CD8-positive, alpha-beta T cell (primary cell): ENCODE measurements at regions of chr14 and their contacts with region 1.

Region 1: GRCh38 chr14:28407996-28408395 is 358.6 kb upstream of the FOXG1 start:
- DNase-seq: no peak
- ATAC-seq: no peak
- H3K4me3 ChIP-seq: no peak overlapping the region
- H3K4me3 Mint-ChIP-seq: no peak overlapping the region
- H3K27ac ChIP-seq: no peak overlapping the region
- H3K27ac Mint-ChIP-seq: no peak overlapping the region
- H3K4me1 ChIP-seq: no peaks in the 10 kb centered on the region
- H3K4me1 Mint-ChIP-seq: no peaks in the 10 kb centered on the region
- H3K27me3 ChIP-seq: no peaks in the 10 kb centered on the region
- H3K27me3 Mint-ChIP-seq: no peaks in the 10 kb centered on the region
- CTCF ChIP-seq: no peak

Region 2: GRCh38 chr14:27916326-27916725 is 491.7 kb before region 1 on chr14:
- CTCF ChIA-PET with region 1: no interaction called
- POLR2A ChIA-PET with region 1: no interaction called
- intact Hi-C with region 1: no loop called
- DNase-seq: no peak
- ATAC-seq: no peak
- H3K4me3 ChIP-seq: no peak overlapping the region
- H3K4me3 Mint-ChIP-seq: no peak overlapping the region
- H3K27ac ChIP-seq: no peak overlapping the region
- H3K27ac Mint-ChIP-seq: no peak overlapping the region
- H3K4me1 ChIP-seq: no peaks in the 10 kb centered on the region
- H3K4me1 Mint-ChIP-seq: no peaks in the 10 kb centered on the region
- H3K27me3 ChIP-seq: no peaks in the 10 kb centered on the region
- H3K27me3 Mint-ChIP-seq: no peaks in the 10 kb centered on the region
- CTCF ChIP-seq: no peak

Region 3: DNA sequence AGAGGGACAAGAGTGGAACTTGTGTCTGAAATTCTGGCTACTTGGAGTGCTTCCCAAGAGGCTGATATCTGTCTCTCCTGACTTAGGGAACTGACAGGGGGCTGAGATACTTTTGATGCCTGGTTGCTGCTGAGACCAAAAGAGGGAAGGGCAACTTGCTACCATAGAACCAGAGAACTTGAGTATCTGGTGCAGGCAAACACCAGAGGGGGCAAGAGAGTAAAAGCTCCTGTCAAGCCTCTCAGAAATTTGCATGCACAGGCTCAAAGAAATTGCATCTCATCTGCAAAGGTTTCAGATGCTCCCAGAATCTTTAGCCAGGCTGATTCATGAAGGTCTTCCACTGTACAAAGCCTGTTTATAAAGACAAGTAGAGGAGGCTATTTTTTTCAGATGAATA is 32.7 kb before region 1 on chr14:
- CTCF ChIA-PET with region 1: no interaction called
- POLR2A ChIA-PET with region 1: no interaction called
- intact Hi-C with region 1: no loop called
- DNase-seq: no peak
- ATAC-seq: no peak
- H3K4me3 ChIP-seq: no peak overlapping the region
- H3K4me3 Mint-ChIP-seq: no peak overlapping the region
- H3K27ac ChIP-seq: no peak overlapping the region
- H3K27ac Mint-ChIP-seq: no peak overlapping the region
- H3K4me1 ChIP-seq: no peaks in the 10 kb centered on the region
- H3K4me1 Mint-ChIP-seq: no peaks in the 10 kb centered on the region
- H3K27me3 ChIP-seq: no peaks in the 10 kb centered on the region
- H3K27me3 Mint-ChIP-seq: no peaks in the 10 kb centered on the region
- CTCF ChIP-seq: no peak

Region 4: GRCh38 chr14:28482251-28483040 is 74.5 kb after region 1 on chr14:
- CTCF ChIA-PET with region 1: no interaction called
- POLR2A ChIA-PET with region 1: no interaction called
- intact Hi-C with region 1: loop called in 1 of 2 experiments (anchors 2 kb)
- DNase-seq: no peak
- ATAC-seq: no peak
- H3K4me3 ChIP-seq: no peak overlapping the region
- H3K4me3 Mint-ChIP-seq: no peak overlapping the region
- H3K27ac ChIP-seq: no peak overlapping the region
- H3K27ac Mint-ChIP-seq: no peak overlapping the region
- H3K4me1 ChIP-seq: no peaks in the 10 kb centered on the region
- H3K4me1 Mint-ChIP-seq: no peaks in the 10 kb centered on the region
- H3K27me3 ChIP-seq: no peaks in the 10 kb centered on the region
- H3K27me3 Mint-ChIP-seq: no peaks in the 10 kb centered on the region
- CTCF ChIP-seq: no peak

Region 5: GRCh38 chr14:28494196-28494595 is 86.2 kb after region 1 on chr14:
- CTCF ChIA-PET with region 1: no interaction called
- POLR2A ChIA-PET with region 1: no interaction called
- intact Hi-C with region 1: no loop called
- DNase-seq: no peak
- ATAC-seq: no peak
- H3K4me3 ChIP-seq: no peak overlapping the region
- H3K4me3 Mint-ChIP-seq: no peak overlapping the region
- H3K27ac ChIP-seq: no peak overlapping the region
- H3K27ac Mint-ChIP-seq: no peak overlapping the region
- H3K4me1 ChIP-seq: no peaks in the 10 kb centered on the region
- H3K4me1 Mint-ChIP-seq: no peaks in the 10 kb centered on the region
- H3K27me3 ChIP-seq: no peaks in the 10 kb centered on the region
- H3K27me3 Mint-ChIP-seq: no peaks in the 10 kb centered on the region
- CTCF ChIP-seq: no peak